AG04449 (cell line): ENCODE measurements at regions of chr4 and their contacts with region 1.

Region 1: DNA sequence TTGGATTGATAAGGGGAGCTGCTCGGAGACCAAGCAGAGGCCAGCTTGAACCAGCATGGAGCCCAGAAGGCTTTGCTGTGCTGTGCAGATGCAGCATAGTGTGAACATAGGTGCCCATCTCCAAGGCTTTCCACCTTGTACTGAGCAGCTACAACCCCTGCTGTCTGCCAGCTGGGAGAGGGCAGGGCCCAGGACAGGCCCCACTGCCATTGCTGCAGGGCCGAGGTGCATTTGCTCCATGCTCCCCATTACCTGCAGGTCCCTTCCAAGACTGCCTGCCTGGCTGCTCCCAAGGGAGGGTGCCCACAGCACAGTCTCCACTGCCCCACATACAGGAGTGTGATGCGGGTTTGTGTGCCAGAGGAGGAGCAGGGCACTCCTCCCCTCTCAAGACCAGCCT is 1016.0 kb upstream of the INTU start:
- DNase-seq: no peak
- H3K4me3 ChIP-seq: no peak overlapping the region
- CTCF ChIP-seq: no peak

Region 2: GRCh38 chr4:126604268-126604867 is 12.4 kb before region 1 on chr4:
- CTCF ChIA-PET with region 1: interaction called, 42 read pairs
- POLR2A ChIA-PET with region 1: no interaction called
- DNase-seq: no peak
- H3K4me3 ChIP-seq: no peak overlapping the region
- CTCF ChIP-seq: peak; percentile 59